ENCODE measurements at regions of chr18 and their contacts with region 1.

Region 1: DNA sequence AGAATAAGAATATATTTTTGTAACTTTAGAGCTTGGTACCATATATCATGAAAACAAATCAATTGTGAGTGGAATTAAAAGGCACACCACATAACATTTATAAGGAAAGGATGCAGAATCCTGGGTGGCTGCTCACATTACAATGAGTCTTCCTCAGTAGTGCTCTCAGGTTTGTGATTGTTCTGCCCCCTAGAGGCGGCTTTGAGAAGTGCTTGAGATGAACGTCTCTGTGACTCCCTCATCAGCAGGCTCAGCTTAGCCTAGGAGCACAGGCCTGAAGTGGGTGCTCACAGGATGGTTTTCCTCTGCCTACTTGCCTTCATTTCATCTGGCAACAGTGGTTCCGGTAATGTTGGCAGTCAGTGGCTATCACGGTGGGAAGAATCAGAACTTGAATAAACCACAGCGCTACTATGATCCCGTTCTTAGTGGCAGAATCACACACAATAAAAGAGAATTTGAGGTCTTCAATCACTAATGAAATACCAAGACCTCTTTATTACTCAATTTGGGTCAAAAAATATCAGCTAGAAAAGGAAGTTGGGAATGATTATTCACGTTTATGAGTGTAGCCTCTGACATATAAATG is 38.1 kb upstream of the B4GALT6 start:
- DNase-seq: peak; percentile 85
- H3K4me3 Mint-ChIP-seq: no peak overlapping the region
- H3K27ac Mint-ChIP-seq: no peak overlapping the region
- H3K4me1 Mint-ChIP-seq: peaks cover 10% of the 10 kb centered on the region
- H3K27me3 Mint-ChIP-seq: peaks cover 40% of the 10 kb centered on the region

Region 2: GRCh38 chr18:31506024-31506742 is 216.3 kb before region 1 on chr18:
- CTCF ChIA-PET with region 1: no interaction called
- DNase-seq: no peak
- H3K4me3 Mint-ChIP-seq: no peak overlapping the region
- H3K27ac Mint-ChIP-seq: no peak overlapping the region
- H3K4me1 Mint-ChIP-seq: no peaks in the 10 kb centered on the region
- H3K27me3 Mint-ChIP-seq: peaks cover 8% of the 10 kb centered on the region

Region 3: DNA sequence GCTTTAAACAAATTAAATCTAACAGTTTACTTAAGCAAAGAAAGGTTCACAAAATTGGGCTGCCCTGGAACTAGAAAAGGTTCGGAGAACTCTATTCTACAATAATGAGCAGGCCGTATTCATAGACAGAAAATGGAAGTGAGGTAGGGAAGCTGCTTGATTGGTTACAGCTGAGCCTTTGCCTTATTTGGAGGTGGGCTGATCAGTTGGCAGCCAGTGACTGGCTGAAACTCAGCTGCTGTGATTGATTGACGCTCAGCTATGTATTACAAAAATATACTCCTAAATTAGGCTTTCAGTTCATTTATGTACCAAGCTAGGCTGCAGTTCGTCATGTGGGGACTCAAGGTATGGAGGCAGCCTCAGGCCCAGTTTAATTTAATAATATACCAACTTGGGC is 173.0 kb before region 1 on chr18:
- CTCF ChIA-PET with region 1: interaction called, 57 read pairs
- DNase-seq: no peak
- H3K4me3 Mint-ChIP-seq: no peak overlapping the region
- H3K27ac Mint-ChIP-seq: no peak overlapping the region
- H3K4me1 Mint-ChIP-seq: no peaks in the 10 kb centered on the region
- H3K27me3 Mint-ChIP-seq: no peaks in the 10 kb centered on the region

Region 4: GRCh38 chr18:31555971-31556747 is 166.3 kb before region 1 on chr18:
- CTCF ChIA-PET with region 1: interaction called, 57 read pairs
- DNase-seq: peak; percentile 47
- H3K4me3 Mint-ChIP-seq: no peak overlapping the region
- H3K27ac Mint-ChIP-seq: no peak overlapping the region
- H3K4me1 Mint-ChIP-seq: no peaks in the 10 kb centered on the region
- H3K27me3 Mint-ChIP-seq: peaks cover 4% of the 10 kb centered on the region

Region 5: DNA sequence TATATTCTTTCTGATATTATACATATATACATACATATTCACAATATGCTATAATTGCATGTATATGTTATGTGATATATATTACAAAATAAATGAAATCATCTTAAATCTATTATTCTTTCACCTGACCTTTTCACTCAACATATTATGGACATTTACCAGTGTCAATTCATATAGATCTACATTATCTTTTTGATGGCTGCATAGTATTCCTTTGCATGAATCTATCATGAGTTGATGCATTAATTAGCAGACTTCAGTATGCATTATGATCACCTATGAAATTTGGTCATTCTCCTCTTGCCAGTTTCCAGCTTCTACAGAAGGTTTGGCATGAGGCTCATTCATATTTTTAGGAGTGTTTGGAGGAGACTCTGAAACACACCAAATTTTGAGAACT is 14.6 kb before region 1 on chr18:
- CTCF ChIA-PET with region 1: interaction called, 10 read pairs
- DNase-seq: no peak
- H3K4me3 Mint-ChIP-seq: no peak overlapping the region
- H3K27ac Mint-ChIP-seq: no peak overlapping the region
- H3K4me1 Mint-ChIP-seq: peaks cover 2% of the 10 kb centered on the region
- H3K27me3 Mint-ChIP-seq: no peaks in the 10 kb centered on the region